Sciatic nerve (tissue), 2 donors: ENCODE measurements at regions of chr2 and their contacts with region 1.

Region 1: GRCh38 chr2:39587641-39588040 is 78.1 kb upstream of the TMEM178A start:
- DNase-seq: no peak
- ATAC-seq: no peak

Region 2: GRCh38 chr2:38900726-38901125 is 686.9 kb before region 1 on chr2:
- intact Hi-C with region 1: loop called (anchors 5 kb)
- DNase-seq: no peak
- ATAC-seq: no peak